ENCODE measurements at regions of chr19 and their contacts with region 1.

Region 1: GRCh38 chr19:18846862-18847548 is 15.2 kb downstream of the UPF1 start:
- DNase-seq: peak; percentile 81
- ATAC-seq: peak; percentile 74
- H3K4me3 Mint-ChIP-seq: no peak overlapping the region
- H3K27ac Mint-ChIP-seq: peak overlapping the region; percentile 16
- H3K4me1 Mint-ChIP-seq: peaks cover 64% of the 10 kb centered on the region
- H3K27me3 Mint-ChIP-seq: no peaks in the 10 kb centered on the region
- CTCF ChIP-seq: peak; percentile 77

Region 2: GRCh38 chr19:18594096-18594823 is 252.7 kb before region 1 on chr19:
- CTCF ChIA-PET with region 1: interaction called, 28 read pairs
- POLR2A ChIA-PET with region 1: no interaction called
- intact Hi-C with region 1: loop called (anchors 10 kb)
- DNase-seq: peak; percentile 79
- ATAC-seq: peak; percentile 80
- H3K4me3 Mint-ChIP-seq: peak overlapping the region; percentile 67
- H3K27ac Mint-ChIP-seq: peak overlapping the region; percentile 41
- H3K4me1 Mint-ChIP-seq: peaks cover 31% of the 10 kb centered on the region
- H3K27me3 Mint-ChIP-seq: peaks cover 3% of the 10 kb centered on the region
- CTCF ChIP-seq: peak; percentile 93

Region 3: GRCh38 chr19:18831524-18832305 is 15.3 kb before region 1 on chr19 and contains the start of gene UPF1:
- CTCF ChIA-PET with region 1: interaction called, 84 read pairs
- POLR2A ChIA-PET with region 1: interaction called, 36 read pairs
- intact Hi-C with region 1: no loop called
- DNase-seq: peak; percentile 96
- ATAC-seq: peak; percentile 86
- H3K4me3 Mint-ChIP-seq: peak within 1 kb of the TSS; percentile 97
- H3K27ac Mint-ChIP-seq: peak within 1 kb of the TSS; percentile 91
- H3K4me1 Mint-ChIP-seq: peaks cover 30% of the 10 kb centered on the region
- H3K27me3 Mint-ChIP-seq: no peaks in the 10 kb centered on the region
- CTCF ChIP-seq: no peak
- total RNA-seq, gene UPF1: 75.9 to 87.6 TPM

Region 4: DNA sequence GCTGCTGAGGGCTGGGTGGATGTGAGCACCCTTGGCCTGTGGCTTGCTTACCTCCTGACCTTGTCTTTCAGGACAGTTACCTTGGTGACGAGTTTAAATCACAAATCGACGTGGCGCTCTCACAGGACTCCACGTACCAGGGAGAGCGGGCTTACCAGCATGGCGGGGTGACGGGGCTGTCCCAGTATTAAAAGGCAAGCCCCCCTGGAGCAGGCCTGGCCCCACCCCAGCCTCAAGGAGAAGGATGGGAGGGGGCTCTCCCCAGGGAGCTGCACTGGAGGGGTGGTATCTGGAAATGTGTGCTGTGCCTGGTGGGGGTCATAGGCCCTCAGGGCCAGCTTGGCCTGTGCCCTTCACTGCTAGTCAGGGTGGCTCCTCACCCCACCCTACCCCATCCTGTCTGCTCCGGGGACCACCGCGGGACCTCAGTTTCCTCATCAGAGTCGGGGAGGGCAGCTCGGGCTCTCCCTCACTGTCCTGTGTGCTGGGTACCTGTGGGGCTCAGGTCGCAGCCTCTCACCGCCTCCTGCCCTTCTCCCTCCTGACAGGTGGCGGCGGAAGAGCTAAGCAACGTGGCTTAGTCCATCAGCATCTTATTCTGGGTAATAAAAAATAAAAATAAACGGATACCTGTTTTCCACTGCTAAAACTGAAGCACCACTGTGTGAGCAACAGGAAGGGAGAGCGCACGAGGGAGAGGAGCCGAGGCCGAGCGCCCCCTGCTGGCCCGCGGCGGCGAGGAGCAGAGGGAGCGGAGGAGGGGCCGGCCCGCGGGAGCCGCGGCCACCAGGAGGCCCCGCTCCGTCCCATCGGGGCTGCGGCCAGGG is 19.2 kb after region 1 on chr19:
- CTCF ChIA-PET with region 1: interaction called, 38 read pairs
- POLR2A ChIA-PET with region 1: no interaction called
- intact Hi-C with region 1: no loop called
- DNase-seq: peak; percentile 74
- ATAC-seq: peak; percentile 86
- H3K4me3 Mint-ChIP-seq: no peak overlapping the region
- H3K27ac Mint-ChIP-seq: no peak overlapping the region
- H3K4me1 Mint-ChIP-seq: peaks cover 3% of the 10 kb centered on the region
- H3K27me3 Mint-ChIP-seq: no peaks in the 10 kb centered on the region
- CTCF ChIP-seq: peak; percentile 100

Measured in activated CD8-positive, alpha-beta T cell treated with anti-CD3 and anti-CD28 coated beads for 36 hours (primary cell).